Left cardiac atrium (tissue), 4 donors: ENCODE measurements at regions of chr2 and their contacts with region 1.

Region 1: DNA sequence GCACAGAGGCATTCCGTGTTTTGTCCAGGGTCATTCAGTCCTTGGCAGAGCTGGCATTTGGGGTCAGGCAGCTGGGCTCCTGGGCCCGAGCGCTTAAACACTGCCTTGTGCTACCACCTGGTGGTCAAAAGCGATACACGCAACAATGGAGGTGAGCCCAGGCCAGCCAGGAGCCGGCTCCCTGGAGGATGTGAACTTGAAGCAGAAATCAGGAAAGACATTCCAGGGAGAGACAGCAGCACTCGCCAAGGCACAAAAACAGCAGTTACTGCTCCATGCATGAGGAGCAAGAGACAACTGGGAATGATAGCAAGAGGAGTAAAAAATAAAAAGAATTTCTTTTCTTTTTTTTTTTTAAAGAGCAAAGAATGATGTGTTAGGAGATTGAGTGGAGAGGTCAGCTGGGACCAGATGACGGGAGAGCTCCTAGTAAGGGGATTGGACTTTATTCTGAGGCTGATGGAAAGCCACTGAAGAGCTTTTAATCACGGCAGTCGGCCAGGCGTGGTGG is 20.7 kb downstream of the SCYGR8 start:
- DNase-seq: peak; percentile 84
- ATAC-seq: peak; percentile 98 to 99

Region 2: DNA sequence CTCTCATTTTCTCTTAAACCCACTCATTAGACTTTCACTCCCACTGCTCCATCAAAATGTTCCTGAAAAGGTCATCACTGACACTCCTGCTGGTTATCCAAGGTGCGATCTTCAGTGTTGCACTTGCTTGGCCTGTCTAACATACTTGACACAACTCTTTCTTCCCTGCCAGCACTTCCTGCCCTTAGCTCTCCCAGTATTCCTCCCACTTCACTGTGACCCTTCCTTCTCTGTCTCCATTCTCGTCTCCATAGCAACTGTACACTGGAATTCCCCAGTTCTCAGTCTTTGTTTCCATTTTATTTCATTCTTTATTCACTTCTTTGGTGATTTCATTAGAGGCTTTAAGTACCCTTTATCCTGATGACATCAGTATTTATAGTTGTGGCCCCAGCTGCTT is 1299.9 kb before region 1 on chr2:
- intact Hi-C with region 1: no loop called
- DNase-seq: no peak
- ATAC-seq: no peak

Region 3: DNA sequence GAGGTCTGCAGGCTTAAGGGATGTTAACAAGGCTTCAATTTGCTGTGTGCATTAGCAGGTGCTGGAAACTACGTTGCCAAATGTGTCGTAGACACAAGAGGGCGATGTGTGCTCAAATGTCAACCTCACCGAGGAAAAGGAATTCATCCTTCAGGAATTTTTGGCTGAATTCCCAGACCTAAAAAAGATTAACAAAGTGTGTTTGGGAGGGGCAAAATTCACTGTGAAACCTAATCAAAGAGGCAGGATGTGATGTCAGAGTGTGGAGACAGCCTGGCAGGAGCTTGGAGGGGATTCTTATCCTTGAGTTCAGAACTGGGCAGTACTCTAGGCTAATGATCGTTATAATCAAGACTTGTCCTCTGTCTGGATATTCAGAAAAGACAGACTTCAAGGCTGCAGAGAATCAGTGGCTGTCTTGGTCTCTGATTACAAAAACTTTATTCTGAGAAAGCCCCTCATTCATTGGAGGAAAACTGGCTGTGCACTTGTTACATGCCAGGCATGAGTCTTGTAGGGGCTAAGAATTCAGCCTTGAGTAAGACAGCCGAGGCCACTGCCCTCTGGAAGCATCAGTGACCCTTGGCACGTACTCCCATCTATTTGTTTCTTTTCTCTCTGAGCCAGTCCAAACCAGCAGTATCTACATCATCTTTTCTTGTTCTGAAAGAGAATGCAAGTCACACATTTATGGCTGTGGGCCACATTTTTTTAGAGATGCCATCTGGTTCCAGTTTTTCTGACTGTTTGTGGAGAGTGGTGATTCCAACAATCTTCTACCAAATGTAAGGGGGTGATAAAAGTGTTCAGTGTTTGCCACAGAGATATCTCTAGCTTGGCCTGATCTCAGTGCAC is 360.0 kb before region 1 on chr2:
- intact Hi-C with region 1: loop called (anchors 2 to 5 kb)
- DNase-seq: peak; percentile 54
- ATAC-seq: peak; percentile 88 to 90

Region 4: DNA sequence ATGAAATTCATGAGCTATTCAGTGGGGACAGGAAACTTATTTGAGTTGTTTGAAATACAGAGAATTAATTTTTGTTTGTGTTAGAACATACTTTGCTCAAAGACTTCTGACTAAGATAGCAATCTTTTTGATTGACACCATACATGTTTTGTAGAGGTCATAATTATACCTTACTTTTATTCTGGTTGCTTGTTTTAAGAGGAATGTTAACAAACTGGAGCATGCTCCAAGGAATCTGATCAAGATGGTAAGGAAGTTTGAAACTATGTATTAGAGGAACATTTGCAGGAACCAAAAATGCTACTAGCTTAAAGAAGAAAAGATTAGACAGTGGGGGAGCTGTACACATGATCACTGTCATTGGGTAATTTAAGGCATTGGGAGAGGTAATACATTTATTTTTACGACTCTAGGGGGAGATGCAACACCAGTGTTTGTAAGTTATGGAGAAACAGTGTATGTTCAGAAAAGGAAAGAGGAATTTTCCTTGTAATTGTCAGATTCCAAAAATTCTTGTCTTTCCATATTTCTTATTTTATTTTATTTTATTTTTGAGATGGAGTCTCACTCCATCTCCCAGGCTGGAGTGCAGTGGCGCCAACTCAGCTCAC is 286.5 kb before region 1 on chr2:
- intact Hi-C with region 1: loop called in 1 of 2 experiments (anchors 5 kb)
- DNase-seq: no peak
- ATAC-seq: peak; percentile 72 to 80

Region 5: GRCh38 chr2:227661019-227661649 is 105.3 kb before region 1 on chr2:
- intact Hi-C with region 1: loop called in 1 of 2 experiments (anchors 5 kb)
- DNase-seq: no peak
- ATAC-seq: peak; percentile 44 to 54

Region 6: GRCh38 chr2:228516019-228516418 is 749.6 kb after region 1 on chr2:
- intact Hi-C with region 1: no loop called
- DNase-seq: no peak
- ATAC-seq: no peak